ENCODE measurements at regions of chr2 and their contacts with region 1.

Region 1: DNA sequence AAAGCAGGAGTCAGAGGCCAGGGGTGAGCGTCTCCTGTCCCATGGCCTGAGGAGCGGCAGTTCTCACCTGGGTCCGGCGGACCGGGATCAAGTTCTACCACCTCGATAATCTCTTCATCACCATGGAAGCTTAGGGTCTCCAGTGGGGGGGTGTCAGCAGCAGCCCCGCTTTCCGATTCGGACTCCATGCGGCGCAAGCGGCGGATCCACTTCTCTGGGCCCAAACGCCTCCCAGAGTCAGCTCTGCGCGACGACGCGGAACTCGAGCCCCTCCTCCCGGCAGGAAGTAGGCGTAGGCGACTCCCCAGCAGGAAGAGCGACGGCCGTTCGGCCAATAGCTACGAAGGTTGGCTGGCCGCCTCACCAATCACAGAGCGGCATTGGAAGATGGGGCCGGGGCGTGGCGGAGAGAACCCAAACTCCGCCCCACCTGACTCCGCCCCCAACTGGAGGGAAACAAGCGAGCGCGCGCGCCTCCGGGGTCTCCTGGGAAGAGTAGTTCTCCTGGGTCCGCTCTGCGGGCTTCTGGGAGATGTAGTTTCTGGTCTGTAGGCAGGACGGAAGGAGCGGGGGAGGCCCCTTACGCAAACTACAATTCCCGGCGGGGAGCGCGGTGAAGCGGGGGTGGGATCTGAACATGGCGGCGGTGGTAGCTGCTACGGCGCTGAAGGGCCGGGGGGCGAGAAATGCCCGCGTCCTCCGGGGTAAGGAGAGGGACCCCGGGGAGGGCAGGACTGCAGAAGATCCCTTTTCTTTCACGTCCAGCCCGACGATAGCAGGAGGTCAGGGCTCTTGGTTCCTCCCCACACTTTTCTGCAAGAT is at the starts of genes AAMP and PNKD:
- DNase-seq: peak; percentile 100
- H3K4me3 Mint-ChIP-seq: peak within 1 kb of the TSS; percentile 94
- H3K27ac Mint-ChIP-seq: peak within 1 kb of the TSS; percentile 93
- H3K4me1 Mint-ChIP-seq: peaks cover 20% of the 10 kb centered on the region
- H3K27me3 Mint-ChIP-seq: no peaks in the 10 kb centered on the region
- total RNA-seq, gene AAMP: 82.4 and 82.9 TPM in 2 replicates
- total RNA-seq, gene PNKD: 19.9 and 20.8 TPM in 2 replicates

Region 2: GRCh38 chr2:218186355-218186766 is 83.7 kb before region 1 on chr2:
- intact Hi-C with region 1: loop called (anchors 1 kb)
- DNase-seq: peak; percentile 56
- H3K4me3 Mint-ChIP-seq: no peak overlapping the region
- H3K27ac Mint-ChIP-seq: no peak overlapping the region
- H3K4me1 Mint-ChIP-seq: peaks cover 13% of the 10 kb centered on the region
- H3K27me3 Mint-ChIP-seq: peaks cover 7% of the 10 kb centered on the region

Region 3: GRCh38 chr2:218216674-218217359 is 53.3 kb before region 1 on chr2 and contains the start of gene ARPC2:
- intact Hi-C with region 1: loop called (anchors 1 kb)
- DNase-seq: peak; percentile 95
- H3K4me3 Mint-ChIP-seq: peak within 1 kb of the TSS; percentile 89
- H3K27ac Mint-ChIP-seq: peak within 1 kb of the TSS; percentile 95
- H3K4me1 Mint-ChIP-seq: peaks cover 35% of the 10 kb centered on the region
- H3K27me3 Mint-ChIP-seq: peaks cover 2% of the 10 kb centered on the region
- total RNA-seq, gene ARPC2: 639 and 643 TPM in 2 replicates

Region 4: DNA sequence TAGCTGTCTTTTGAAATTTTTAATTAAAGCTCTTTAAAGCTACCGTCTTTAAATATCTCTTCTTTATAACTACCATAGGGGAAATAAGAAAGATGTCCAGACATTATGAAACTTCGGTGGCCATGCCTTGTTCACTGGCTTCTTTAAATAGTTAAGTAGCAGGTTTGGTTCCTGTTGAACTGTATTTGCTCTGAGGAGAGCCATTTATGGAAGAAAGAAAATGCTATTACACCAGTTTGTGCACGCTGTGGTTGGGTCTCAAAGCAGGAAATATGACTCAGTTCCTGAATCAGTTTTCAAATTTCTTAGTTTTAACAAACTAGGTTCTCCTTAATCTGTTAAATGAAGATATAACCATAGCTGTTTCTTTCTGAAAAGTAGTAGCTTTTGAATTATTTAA is 40.9 kb before region 1 on chr2:
- intact Hi-C with region 1: loop called (anchors 1 kb)
- DNase-seq: peak; percentile 38
- H3K4me3 Mint-ChIP-seq: peak overlapping the region; percentile 47
- H3K27ac Mint-ChIP-seq: peak overlapping the region; percentile 85
- H3K4me1 Mint-ChIP-seq: peaks cover 59% of the 10 kb centered on the region
- H3K27me3 Mint-ChIP-seq: no peaks in the 10 kb centered on the region

Region 5: GRCh38 chr2:218286570-218287459 is 16.7 kb after region 1 on chr2:
- intact Hi-C with region 1: loop called (anchors 1 kb)
- DNase-seq: peak; percentile 82
- H3K4me3 Mint-ChIP-seq: peak overlapping the region; percentile 85
- H3K27ac Mint-ChIP-seq: peak overlapping the region; percentile 98
- H3K4me1 Mint-ChIP-seq: peaks cover 69% of the 10 kb centered on the region
- H3K27me3 Mint-ChIP-seq: no peaks in the 10 kb centered on the region

Region 6: DNA sequence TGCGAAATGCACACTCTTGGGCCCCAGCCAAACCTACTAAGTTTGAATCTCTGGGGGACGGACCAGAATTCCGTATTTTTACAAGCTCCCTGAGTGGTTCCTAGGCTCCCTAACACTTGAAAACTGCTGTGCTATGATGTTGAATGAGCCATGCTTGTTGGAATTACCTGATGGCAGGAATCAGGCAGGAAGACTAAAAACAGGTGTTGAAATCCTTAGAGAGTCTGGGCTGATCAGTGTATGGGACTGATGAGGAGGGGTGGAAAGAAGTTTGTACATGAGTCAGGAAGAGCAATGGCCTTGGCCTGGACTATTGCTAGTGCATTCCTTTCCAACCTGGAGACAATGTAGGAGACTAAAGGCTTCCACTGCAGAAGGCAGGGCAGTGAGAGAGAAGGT is 47.1 kb after region 1 on chr2:
- intact Hi-C with region 1: loop called (anchors 2 kb)
- DNase-seq: no peak
- H3K4me3 Mint-ChIP-seq: no peak overlapping the region
- H3K27ac Mint-ChIP-seq: no peak overlapping the region
- H3K4me1 Mint-ChIP-seq: peaks cover 20% of the 10 kb centered on the region
- H3K27me3 Mint-ChIP-seq: no peaks in the 10 kb centered on the region

Region 7: GRCh38 chr2:218360447-218360846 is 90.3 kb after region 1 on chr2:
- intact Hi-C with region 1: loop called (anchors 1 kb)
- DNase-seq: no peak
- H3K4me3 Mint-ChIP-seq: no peak overlapping the region
- H3K27ac Mint-ChIP-seq: no peak overlapping the region
- H3K4me1 Mint-ChIP-seq: no peaks in the 10 kb centered on the region
- H3K27me3 Mint-ChIP-seq: peaks cover 1% of the 10 kb centered on the region

Region 8: DNA sequence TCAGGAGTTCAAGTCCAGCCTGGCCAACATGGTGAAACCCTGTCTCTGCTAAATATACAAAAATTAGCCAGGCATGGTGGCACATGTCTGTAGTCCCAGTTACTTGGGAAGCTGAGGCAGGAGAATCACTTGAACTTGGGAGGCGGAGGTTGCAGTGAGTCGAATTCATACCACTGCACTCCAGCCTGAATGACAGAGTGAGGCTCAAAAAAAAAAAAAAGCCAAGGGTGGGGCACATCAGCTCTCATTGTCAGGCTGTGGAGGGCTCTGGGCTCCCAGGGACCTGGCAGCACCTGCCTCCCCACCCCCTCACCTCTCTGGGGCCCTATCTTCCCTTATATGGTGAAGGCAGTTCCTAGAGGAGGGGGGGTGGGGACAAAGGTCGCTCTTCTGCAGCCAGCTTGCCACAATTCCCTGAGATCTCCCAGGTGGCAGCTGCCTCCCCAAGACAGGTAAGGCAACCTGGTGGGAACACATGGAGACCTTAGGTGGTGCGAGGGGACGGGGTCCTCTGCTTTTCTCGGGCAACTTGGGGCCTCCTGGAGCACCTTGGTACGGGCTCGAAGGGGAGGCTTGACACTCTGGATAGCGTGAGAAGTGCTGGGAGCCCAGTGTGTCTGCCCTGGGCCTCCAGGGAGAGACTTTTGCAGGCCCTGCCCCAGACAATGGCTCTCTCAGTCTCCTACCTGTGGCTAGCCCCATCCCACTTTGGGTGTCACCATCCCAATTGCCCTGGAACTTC is 148.8 kb after region 1 on chr2 and contains the start of gene VIL1:
- intact Hi-C with region 1: no loop called
- DNase-seq: no peak
- H3K4me3 Mint-ChIP-seq: no peak within 1 kb of the TSS
- H3K27ac Mint-ChIP-seq: no peak within 1 kb of the TSS
- H3K4me1 Mint-ChIP-seq: no peaks in the 10 kb centered on the region
- H3K27me3 Mint-ChIP-seq: no peaks in the 10 kb centered on the region
- total RNA-seq, gene VIL1: not detected in 2 replicates

Measured in activated T-helper 2 cell treated with anti-CD3 and anti-CD28 coated beads, Interferon-gamma antibody, Interleukin-2, Interleukin-4, amounts not matched to agents 10 μg/mL and 5 μg/mL and 100 μg/mL, durations not matched to agents 14 hours and 24 hours and 36 hours (primary cell).